Caco-2 (cell line): ENCODE measurements at regions of chr13 and their contacts with region 1.

Region 1: GRCh38 chr13:49606747-49607648 is 21.3 kb upstream of the ARL11 start:
- DNase-seq: peak; percentile 83 to 84
- H3K4me3 ChIP-seq: no peak overlapping the region
- H3K4me3 Mint-ChIP-seq: peak overlapping the region; percentile 60
- H3K27ac Mint-ChIP-seq: no peak overlapping the region
- H3K4me1 ChIP-seq: no peaks in the 10 kb centered on the region
- H3K4me1 Mint-ChIP-seq: peaks cover 7% of the 10 kb centered on the region
- H3K27me3 ChIP-seq: no peaks in the 10 kb centered on the region
- H3K27me3 Mint-ChIP-seq: no peaks in the 10 kb centered on the region
- CTCF ChIP-seq: peak; percentile 83 to 88

Region 2: GRCh38 chr13:49240017-49240416 is 367.0 kb before region 1 on chr13:
- CTCF ChIA-PET with region 1: interaction called, 4 read pairs
- POLR2A ChIA-PET with region 1: no interaction called
- intact Hi-C with region 1: loop called (anchors 2 kb)
- DNase-seq: peak in 1 of 2 experiments; percentile 33
- H3K4me3 ChIP-seq: no peak overlapping the region
- H3K4me3 Mint-ChIP-seq: no peak overlapping the region
- H3K27ac Mint-ChIP-seq: no peak overlapping the region
- H3K4me1 ChIP-seq: peaks cover 13% of the 10 kb centered on the region; the same call in 1 of the 2 replicates
- H3K4me1 Mint-ChIP-seq: peaks cover 9% of the 10 kb centered on the region
- H3K27me3 ChIP-seq: no peaks in the 10 kb centered on the region
- H3K27me3 Mint-ChIP-seq: peaks cover 1% of the 10 kb centered on the region
- CTCF ChIP-seq: peak; percentile 35 to 55

Region 3: GRCh38 chr13:49278211-49278610 is 328.8 kb before region 1 on chr13:
- CTCF ChIA-PET with region 1: no interaction called
- POLR2A ChIA-PET with region 1: no interaction called
- intact Hi-C with region 1: loop called (anchors 5 kb)
- DNase-seq: no peak
- H3K4me3 ChIP-seq: no peak overlapping the region
- H3K4me3 Mint-ChIP-seq: no peak overlapping the region
- H3K27ac Mint-ChIP-seq: no peak overlapping the region
- H3K4me1 ChIP-seq: 0 out of 2 replicates have a peak, but pooled peaks cover 3% of the 10 kb centered on the region
- H3K4me1 Mint-ChIP-seq: no peaks in the 10 kb centered on the region
- H3K27me3 ChIP-seq: no peaks in the 10 kb centered on the region
- H3K27me3 Mint-ChIP-seq: no peaks in the 10 kb centered on the region
- CTCF ChIP-seq: no peak

Region 4: DNA sequence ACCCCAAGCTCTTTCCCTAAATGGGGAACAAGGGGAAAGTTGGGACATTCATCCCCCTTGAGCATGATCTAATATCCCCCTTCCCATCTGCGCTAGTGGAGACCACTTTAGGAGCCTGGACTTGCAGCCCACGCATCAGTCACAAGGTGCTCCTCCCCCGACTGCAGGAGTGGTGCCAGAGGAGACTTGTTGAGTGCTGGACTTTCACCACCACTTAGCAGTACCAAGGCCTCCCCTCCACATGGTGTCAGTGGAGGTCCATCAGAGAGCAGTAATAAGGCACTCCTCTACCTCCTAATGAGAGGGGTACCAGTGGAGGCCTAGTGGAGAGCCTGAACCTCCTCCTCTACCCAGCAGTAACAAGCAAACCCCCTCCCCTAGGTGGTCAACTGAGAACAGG is 185.6 kb before region 1 on chr13:
- CTCF ChIA-PET with region 1: no interaction called
- POLR2A ChIA-PET with region 1: no interaction called
- intact Hi-C with region 1: loop called (anchors 1 kb)
- DNase-seq: peak; percentile 58 to 62
- H3K4me3 ChIP-seq: no peak overlapping the region
- H3K4me3 Mint-ChIP-seq: no peak overlapping the region
- H3K27ac Mint-ChIP-seq: no peak overlapping the region
- H3K4me1 ChIP-seq: no peaks in the 10 kb centered on the region
- H3K4me1 Mint-ChIP-seq: peaks cover 4% of the 10 kb centered on the region
- H3K27me3 ChIP-seq: no peaks in the 10 kb centered on the region
- H3K27me3 Mint-ChIP-seq: no peaks in the 10 kb centered on the region
- CTCF ChIP-seq: peak; percentile 20 to 26

Region 5: GRCh38 chr13:49517461-49517860 is 89.5 kb before region 1 on chr13:
- CTCF ChIA-PET with region 1: interaction called, 3 read pairs
- POLR2A ChIA-PET with region 1: no interaction called
- intact Hi-C with region 1: loop called (anchors 5 kb)
- DNase-seq: peak in 1 of 2 experiments; percentile 40
- H3K4me3 ChIP-seq: no peak overlapping the region
- H3K4me3 Mint-ChIP-seq: no peak overlapping the region
- H3K27ac Mint-ChIP-seq: no peak overlapping the region
- H3K4me1 ChIP-seq: no peaks in the 10 kb centered on the region
- H3K4me1 Mint-ChIP-seq: no peaks in the 10 kb centered on the region
- H3K27me3 ChIP-seq: no peaks in the 10 kb centered on the region
- H3K27me3 Mint-ChIP-seq: no peaks in the 10 kb centered on the region
- CTCF ChIP-seq: peak; percentile 37 to 64

Region 6: DNA sequence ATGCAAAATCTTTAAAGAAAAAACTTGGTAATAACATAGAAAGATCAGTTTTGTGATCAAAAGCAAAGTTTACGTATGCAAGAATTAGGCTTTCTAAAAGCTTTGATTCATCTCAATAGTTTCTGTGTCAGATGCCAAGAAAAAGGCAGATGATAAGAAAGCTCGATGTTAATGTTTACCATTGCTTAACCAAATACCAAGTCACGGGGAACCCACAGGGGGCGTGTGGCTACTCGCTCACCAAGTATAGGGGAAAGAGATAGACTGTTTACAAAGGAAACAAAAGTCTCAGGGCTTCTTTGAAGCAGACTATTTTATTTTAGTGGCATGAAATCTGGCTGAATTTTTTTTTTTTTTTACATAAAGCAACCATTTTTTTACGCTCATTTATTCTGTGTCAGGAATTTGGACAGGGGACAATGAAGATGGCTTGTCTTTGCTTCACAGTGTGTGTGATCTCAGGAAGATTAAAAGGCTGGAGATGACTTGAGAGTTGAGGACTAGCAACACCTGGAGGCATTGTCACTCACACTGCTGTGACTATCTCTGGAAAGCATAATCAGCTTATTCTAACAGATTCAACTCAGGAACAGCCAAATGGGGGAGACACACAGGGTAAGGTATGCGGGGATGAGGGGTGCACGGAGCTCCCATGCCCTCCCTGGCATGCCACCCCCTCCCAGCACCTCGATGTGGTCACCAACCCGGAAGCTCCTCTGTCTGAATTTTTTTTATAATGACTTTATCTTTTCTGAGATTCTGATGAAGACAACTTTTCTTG is 46.5 kb before region 1 on chr13:
- CTCF ChIA-PET with region 1: interaction called, 4 read pairs
- POLR2A ChIA-PET with region 1: no interaction called
- intact Hi-C with region 1: loop called (anchors 1 kb)
- DNase-seq: peak; percentile 76 to 79
- H3K4me3 ChIP-seq: no peak overlapping the region
- H3K4me3 Mint-ChIP-seq: peak overlapping the region; percentile 45
- H3K27ac Mint-ChIP-seq: peak overlapping the region; percentile 74
- H3K4me1 ChIP-seq: peaks cover 11% of the 10 kb centered on the region
- H3K4me1 Mint-ChIP-seq: peaks cover 21% of the 10 kb centered on the region
- H3K27me3 ChIP-seq: no peaks in the 10 kb centered on the region
- H3K27me3 Mint-ChIP-seq: no peaks in the 10 kb centered on the region
- CTCF ChIP-seq: peak; percentile 62 to 71